ENCODE measurements at regions of chr14 and their contacts with region 1.

Region 1: DNA sequence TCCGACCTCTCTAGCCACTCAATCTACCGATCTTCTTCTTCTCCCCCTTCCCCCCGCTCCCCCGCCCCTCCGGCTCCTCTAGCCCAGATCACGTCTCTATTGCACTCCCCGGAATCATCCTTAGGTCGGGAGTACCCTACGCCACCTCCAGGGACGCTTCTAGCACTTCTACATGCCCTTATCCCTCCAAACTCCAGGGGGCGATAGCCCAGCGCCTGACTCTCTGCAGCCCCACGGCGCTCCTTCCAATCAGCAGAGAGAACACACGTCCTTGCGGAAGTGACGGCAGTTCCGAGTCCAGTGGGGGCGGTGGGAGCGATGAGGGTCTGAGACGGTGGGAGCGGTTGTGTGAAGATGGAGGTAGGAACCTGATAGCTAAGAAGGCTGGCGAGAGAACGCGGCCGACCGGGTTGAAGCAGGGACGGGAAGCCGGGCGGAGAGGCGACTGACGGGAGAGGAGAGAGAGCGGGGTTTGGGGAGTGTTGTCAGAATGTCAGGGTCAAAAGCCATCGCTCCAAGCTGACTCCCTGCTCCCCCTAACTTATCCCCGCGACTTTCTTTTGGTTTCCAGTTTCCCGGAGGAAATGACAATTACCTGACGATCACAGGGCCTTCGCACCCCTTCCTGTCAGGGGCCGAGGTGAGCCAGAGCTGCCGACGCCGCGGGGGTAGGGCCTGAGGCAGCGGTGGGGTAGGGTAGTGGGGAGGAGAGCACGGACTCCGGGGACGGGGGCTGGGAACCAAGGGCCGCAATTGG is at the starts of genes RAB2B and TOX4:
- DNase-seq: peak; percentile 97 to 98
- H3K4me3 ChIP-seq: peak within 1 kb of the TSS; percentile 97
- H3K4me3 Mint-ChIP-seq: peak within 1 kb of the TSS; percentile 97
- H3K27ac Mint-ChIP-seq: peak within 1 kb of the TSS; percentile 97
- H3K4me1 ChIP-seq: peaks cover 3% of the 10 kb centered on the region; the same call in 1 of the 2 replicates
- H3K4me1 Mint-ChIP-seq: no peaks in the 10 kb centered on the region
- H3K27me3 ChIP-seq: no peaks in the 10 kb centered on the region
- H3K27me3 Mint-ChIP-seq: no peaks in the 10 kb centered on the region
- CTCF ChIP-seq: peak; percentile 92 to 99
- total RNA-seq, gene RAB2B: 18.8 and 20.9 TPM in 2 replicates
- total RNA-seq, gene TOX4: 76.6 and 78.8 TPM in 2 replicates

Region 2: DNA sequence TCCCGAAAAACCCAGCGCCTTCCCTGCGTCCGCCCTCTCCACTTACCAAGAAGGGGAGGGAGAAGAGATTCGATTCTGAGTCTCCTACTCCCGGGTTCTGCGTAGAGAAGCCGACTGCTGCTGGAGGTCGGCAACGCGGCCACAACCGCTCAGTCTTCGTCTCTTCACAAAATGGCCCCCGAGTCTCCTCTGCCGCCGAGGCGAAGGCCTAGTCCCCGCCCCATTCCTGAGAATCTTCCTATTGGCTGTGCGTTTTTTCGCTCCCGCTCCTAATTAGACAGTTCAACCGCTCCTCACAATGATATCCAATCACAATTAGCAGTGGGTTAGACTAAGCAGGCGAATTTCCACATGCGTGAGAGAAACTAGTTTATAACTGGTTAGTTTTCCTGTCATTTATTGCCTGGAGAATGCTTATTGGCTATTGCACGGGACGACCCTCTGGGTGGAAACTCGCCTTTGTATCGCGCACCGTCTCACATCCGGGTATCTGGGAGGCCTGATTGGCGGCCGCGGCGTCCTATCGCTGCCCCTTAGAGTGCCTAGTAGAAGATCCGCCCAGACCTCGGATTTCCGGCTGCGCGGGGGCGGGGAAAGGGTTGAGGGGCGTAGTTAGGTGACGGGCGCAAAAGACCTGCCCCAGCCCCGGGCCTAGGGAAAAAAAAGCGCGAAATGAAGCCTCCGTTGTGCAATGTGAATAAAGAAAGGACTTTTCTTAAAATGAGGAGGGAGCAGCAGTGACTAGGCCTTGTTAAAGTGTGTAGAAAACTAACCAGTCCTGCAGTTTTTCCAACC is 207.7 kb before region 1 on chr14 and contains the start of gene HNRNPC:
- CTCF ChIA-PET with region 1: no interaction called
- POLR2A ChIA-PET with region 1: no interaction called
- intact Hi-C with region 1: loop called (anchors 1 kb)
- DNase-seq: peak; percentile 100
- H3K4me3 ChIP-seq: peak within 1 kb of the TSS; percentile 53
- H3K4me3 Mint-ChIP-seq: peak within 1 kb of the TSS; percentile 98
- H3K27ac Mint-ChIP-seq: peak within 1 kb of the TSS; percentile 100
- H3K4me1 ChIP-seq: peaks cover 12% of the 10 kb centered on the region
- H3K4me1 Mint-ChIP-seq: peaks cover 14% of the 10 kb centered on the region
- H3K27me3 ChIP-seq: no peaks in the 10 kb centered on the region
- H3K27me3 Mint-ChIP-seq: no peaks in the 10 kb centered on the region
- CTCF ChIP-seq: no peak
- total RNA-seq, gene HNRNPC: 512 and 536 TPM in 2 replicates

Region 3: GRCh38 chr14:21383848-21384493 is 93.1 kb before region 1 on chr14 and contains the start of gene SUPT16H:
- CTCF ChIA-PET with region 1: interaction called, 6 read pairs
- POLR2A ChIA-PET with region 1: interaction called, 5 read pairs
- intact Hi-C with region 1: loop called (anchors 5 kb)
- DNase-seq: peak; percentile 96 to 97
- H3K4me3 ChIP-seq: peak within 1 kb of the TSS; percentile 89
- H3K4me3 Mint-ChIP-seq: peak within 1 kb of the TSS; percentile 85
- H3K27ac Mint-ChIP-seq: peak within 1 kb of the TSS; percentile 95
- H3K4me1 ChIP-seq: peaks cover 10% of the 10 kb centered on the region
- H3K4me1 Mint-ChIP-seq: peaks cover 12% of the 10 kb centered on the region
- H3K27me3 ChIP-seq: no peaks in the 10 kb centered on the region
- H3K27me3 Mint-ChIP-seq: no peaks in the 10 kb centered on the region
- CTCF ChIP-seq: no peak
- total RNA-seq, gene SUPT16H: 114 and 118 TPM in 2 replicates

Region 4: DNA sequence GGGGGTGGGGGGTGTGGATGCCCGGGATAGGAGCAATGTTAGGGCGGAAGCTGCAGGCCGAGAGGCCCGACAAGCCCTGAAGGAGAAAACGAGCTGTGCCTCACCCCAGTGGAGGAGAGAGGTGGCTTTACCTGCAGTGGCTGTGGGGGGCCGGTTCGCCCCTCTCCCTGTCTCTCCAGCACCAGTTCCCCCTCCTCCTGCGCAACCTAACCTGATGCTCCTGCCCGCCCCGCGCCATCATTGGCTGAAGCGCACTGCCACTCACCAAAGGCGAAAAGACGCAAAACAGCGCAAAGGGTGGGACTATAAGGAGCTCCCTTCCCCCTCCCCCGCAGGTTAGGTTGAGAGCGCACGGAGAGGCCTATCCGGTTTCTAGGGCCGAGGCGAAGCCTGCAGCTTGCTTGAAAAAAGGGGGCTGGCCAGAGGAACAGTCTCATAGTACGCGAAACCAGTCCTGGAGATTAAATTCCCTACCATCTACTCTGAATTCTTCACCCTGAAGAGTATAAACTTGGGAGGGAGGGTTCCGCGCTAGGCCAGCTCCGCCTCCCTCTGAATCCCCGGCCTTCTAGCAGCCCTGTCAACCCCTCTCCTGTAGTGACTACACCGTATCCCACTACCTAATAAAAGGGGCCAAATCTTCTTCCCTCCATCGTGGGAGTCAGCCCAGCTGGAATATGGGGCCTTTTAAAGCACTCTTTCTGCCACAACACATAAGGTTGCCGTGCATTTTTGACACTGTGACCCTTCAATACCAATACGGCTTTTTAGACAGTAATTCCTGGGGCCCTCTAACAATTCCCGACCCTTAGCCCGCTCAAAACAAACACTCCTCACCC is 39.8 kb before region 1 on chr14:
- CTCF ChIA-PET with region 1: interaction called, 3 read pairs
- POLR2A ChIA-PET with region 1: interaction called, 4 read pairs
- intact Hi-C with region 1: loop called (anchors 1 kb)
- DNase-seq: peak; percentile 99
- H3K4me3 ChIP-seq: peak overlapping the region; percentile 93
- H3K4me3 Mint-ChIP-seq: peak overlapping the region; percentile 96
- H3K27ac Mint-ChIP-seq: peak overlapping the region; percentile 94
- H3K4me1 ChIP-seq: peaks cover 10% of the 10 kb centered on the region
- H3K4me1 Mint-ChIP-seq: peaks cover 13% of the 10 kb centered on the region
- H3K27me3 ChIP-seq: no peaks in the 10 kb centered on the region
- H3K27me3 Mint-ChIP-seq: no peaks in the 10 kb centered on the region
- CTCF ChIP-seq: no peak

Region 5: DNA sequence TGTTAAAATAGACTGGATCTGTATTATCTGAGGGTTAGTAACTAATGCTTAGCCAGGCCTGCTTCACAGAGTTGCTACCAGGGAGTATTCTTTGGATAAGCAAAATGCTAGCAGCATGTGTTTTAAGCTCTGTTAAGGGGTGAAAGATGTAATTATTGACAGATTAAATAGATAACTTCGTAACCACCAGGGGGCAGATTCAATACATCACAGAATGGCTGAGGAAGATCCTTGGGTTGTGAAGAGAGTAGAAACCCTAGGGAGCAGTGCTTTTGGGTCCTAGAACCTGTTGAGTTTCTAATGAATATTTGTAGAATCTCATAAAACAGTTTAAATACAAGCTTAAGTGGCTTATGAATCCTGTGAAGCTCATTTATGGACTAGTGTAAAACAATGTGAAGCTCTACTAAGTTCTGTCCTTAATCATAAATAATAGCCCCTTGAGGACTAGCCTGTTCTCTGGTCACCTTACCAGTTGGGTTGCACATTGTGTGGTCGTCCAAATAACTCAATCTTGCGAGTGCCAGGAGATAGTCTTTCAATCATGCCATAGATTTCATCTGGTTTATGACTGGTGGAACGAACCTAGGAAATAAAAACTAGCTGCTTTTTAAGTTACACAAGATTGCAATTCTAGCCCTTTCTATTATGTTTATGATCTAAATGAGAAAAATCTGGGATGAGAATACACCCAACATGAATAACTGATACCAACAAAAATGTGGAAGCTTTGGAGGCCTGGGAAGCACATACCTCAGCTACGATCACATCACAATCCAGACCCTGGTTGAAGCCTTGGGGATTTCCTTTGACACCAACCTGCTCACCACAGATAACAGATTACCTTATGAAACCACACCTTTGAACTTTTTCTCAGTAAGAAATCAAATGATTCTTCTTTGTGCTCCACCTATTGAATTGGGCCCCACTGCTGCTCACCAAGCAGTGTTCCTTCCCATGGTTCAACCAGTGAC is 21.7 kb after region 1 on chr14:
- CTCF ChIA-PET with region 1: interaction called, 13 read pairs
- POLR2A ChIA-PET with region 1: interaction called, 3 read pairs
- intact Hi-C with region 1: no loop called
- DNase-seq: peak in 1 of 2 experiments; percentile 70
- H3K4me3 ChIP-seq: no peak overlapping the region
- H3K4me3 Mint-ChIP-seq: no peak overlapping the region
- H3K27ac Mint-ChIP-seq: peak overlapping the region; percentile 22
- H3K4me1 ChIP-seq: 0 out of 2 replicates have a peak, but pooled peaks cover 11% of the 10 kb centered on the region
- H3K4me1 Mint-ChIP-seq: peaks cover 25% of the 10 kb centered on the region
- H3K27me3 ChIP-seq: no peaks in the 10 kb centered on the region
- H3K27me3 Mint-ChIP-seq: no peaks in the 10 kb centered on the region
- CTCF ChIP-seq: peak; percentile 30

Region 6: DNA sequence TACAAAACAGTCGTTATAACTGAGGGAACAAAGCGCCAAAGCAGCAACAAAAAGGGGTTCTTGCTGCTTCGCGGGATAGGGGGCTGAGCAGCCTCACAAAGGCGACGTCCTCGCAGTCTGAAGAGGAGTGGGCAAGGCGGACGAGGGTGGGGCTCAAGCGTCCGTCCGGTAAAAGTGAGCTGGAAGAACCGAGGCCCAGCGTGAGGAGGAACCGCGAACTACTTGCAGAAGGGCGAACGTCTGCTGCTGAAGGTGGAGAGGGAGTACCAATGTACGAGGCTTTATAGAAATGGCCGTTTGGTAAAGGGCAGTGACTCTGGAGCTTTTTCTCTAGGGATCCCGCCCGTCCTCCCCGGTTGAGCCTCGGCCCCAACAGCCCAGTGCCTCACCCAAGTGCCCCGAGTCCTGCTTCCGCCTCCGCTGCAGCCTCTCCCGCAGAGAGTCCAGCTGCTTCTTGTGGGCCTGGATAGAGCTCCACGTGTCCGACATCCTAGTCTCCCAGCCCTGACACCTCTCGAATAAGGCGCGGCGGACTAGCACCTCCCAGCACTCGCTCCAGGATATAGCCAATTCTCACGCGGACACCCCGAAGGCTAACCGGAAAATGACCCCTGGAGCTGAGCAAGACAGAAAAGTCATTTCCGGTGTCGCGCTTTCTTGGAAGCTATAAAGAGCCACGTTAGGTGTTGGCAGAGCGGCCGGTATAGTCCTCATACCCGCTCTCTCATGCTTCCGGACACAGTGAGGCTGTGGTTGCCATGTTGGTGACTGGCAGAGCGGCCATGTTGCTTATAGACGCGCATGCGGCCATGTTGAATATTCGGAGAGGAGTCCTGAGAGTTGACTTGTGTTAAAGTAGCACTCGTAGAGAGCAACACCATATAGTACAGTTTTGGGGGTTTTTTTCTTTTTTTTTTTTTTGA is 33.9 kb after region 1 on chr14 and contains the start of gene METTL3:
- CTCF ChIA-PET with region 1: interaction called, 5 read pairs
- POLR2A ChIA-PET with region 1: interaction called, 6 read pairs
- intact Hi-C with region 1: loop called (anchors 1 kb)
- DNase-seq: peak; percentile 94 to 98
- H3K4me3 ChIP-seq: peak within 1 kb of the TSS; percentile 89
- H3K4me3 Mint-ChIP-seq: peak within 1 kb of the TSS; percentile 96
- H3K27ac Mint-ChIP-seq: peak within 1 kb of the TSS; percentile 97
- H3K4me1 ChIP-seq: no peaks in the 10 kb centered on the region
- H3K4me1 Mint-ChIP-seq: peaks cover 8% of the 10 kb centered on the region
- H3K27me3 ChIP-seq: no peaks in the 10 kb centered on the region
- H3K27me3 Mint-ChIP-seq: no peaks in the 10 kb centered on the region
- CTCF ChIP-seq: no peak
- total RNA-seq, gene METTL3: 40.1 and 43.8 TPM in 2 replicates